ENCODE measurements at regions of chr12 and their contacts with region 1.

Region 1: DNA sequence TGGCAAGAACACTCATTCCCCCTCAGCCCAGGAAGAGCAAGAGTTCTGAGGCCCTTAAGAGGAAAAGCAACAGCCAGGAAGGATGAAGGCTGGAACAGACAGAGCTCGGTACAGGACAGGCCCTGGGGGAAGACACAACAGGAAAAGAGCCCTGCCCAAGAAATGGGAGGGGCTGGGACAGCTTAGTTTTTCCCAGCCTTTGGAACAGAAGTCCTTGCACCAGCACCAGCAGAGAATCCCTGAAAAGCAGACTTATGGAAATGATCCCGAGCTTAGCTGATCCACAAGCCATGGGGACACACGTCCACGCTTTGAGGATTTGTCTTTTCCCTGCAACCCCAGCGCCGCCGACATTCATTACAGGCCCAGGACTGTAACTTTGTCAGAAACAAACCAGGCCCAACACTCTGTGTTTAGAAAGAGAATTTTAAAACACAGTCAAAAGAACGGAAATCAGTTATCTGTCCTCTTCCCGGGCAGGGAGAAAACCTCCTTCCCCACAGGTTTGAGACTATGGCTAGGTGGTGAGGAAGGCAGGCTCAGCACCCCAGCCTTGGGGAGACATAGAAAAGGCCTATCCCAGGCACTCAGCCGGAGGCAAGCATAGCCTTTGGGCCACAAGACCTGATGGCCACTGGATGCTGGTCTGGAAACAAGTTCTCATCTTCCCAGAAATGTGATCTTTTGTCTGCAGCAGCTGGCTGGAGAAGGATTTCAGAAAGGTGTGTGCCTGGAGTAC is 4.0 kb upstream of the AVIL start:
- DNase-seq: no peak
- H3K4me3 ChIP-seq: no peak overlapping the region
- H3K27ac ChIP-seq: peak overlapping the region; percentile 22 to 33
- H3K4me1 ChIP-seq: no peaks in the 10 kb centered on the region
- H3K27me3 ChIP-seq: no peaks in the 10 kb centered on the region
- CTCF ChIP-seq: no peak
- POLR2A ChIP-seq: no peak

Region 2: GRCh38 chr12:57416039-57416996 is 406.2 kb before region 1 on chr12:
- intact Hi-C with region 1: no loop called
- DNase-seq: no peak
- H3K4me3 ChIP-seq: no peak overlapping the region
- H3K27ac ChIP-seq: no peak overlapping the region
- H3K4me1 ChIP-seq: no peaks in the 10 kb centered on the region
- H3K27me3 ChIP-seq: no peaks in the 10 kb centered on the region
- CTCF ChIP-seq: no peak
- POLR2A ChIP-seq: no peak

Region 3: DNA sequence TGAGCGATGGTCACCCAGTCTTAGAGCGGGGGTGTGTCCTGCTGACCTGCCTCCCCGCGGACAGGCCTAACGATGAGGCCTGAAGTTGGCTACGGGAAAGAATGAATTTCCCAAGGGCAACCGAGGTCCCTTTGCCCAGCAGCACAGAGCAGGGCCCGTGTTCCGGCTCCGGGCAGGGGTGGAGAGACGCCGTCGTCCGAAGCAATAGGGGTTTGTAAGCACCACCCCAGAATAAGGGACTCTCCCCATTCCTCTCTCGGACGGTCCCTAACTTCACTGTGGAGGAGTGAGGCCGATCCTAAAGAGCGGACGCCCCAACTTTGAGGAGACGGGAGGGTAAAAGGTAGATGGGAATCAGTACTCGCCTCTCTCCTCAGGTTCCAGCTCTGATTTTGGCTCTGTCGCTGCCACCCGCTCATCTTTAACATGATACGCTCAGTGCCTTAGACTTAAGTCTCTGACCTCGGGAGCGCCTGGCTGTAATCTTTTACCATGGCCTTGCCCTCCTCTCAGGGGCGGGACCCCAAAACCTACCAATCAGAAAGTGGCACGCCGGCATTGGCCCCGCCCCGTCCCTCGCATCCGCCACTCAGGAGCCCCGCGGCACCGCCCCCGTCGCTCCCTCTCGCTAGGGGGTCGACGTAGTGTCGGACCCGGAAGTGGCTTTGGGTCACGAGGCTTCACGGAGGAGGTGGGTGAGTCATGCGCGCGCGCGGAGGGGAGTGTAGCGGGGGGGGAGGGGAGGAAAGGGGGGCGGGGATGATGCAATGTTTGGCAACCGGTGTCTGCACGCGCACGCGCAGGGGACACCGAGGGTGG is 302.3 kb before region 1 on chr12 and contains the start of gene DDIT3:
- intact Hi-C with region 1: no loop called
- DNase-seq: peak; percentile 100
- H3K4me3 ChIP-seq: peak within 1 kb of the TSS; percentile 84 to 97 (median 93)
- H3K27ac ChIP-seq: peak within 1 kb of the TSS; percentile 99 to 100
- H3K4me1 ChIP-seq: peaks cover 13 to 41% of the 10 kb centered on the region in 2 donors
- H3K27me3 ChIP-seq: no peaks in the 10 kb centered on the region
- CTCF ChIP-seq: no peak
- POLR2A ChIP-seq: peak; percentile 98
- total RNA-seq, gene DDIT3: 39.0 to 58.4 (median 51.2) TPM

Region 4: GRCh38 chr12:57765042-57765697 is 57.4 kb before region 1 on chr12:
- intact Hi-C with region 1: no loop called
- DNase-seq: peak in 1 of 2 donors; percentile 54
- H3K4me3 ChIP-seq: peak overlapping the region; percentile 5 to 63 (median 56)
- H3K27ac ChIP-seq: no peak overlapping the region
- H3K4me1 ChIP-seq: peaks cover 0 to 8% of the 10 kb centered on the region in 2 donors
- H3K27me3 ChIP-seq: peaks cover 0 to 25% of the 10 kb centered on the region in 2 donors
- CTCF ChIP-seq: peak in 2 of 3 donors; percentile 22 to 23
- POLR2A ChIP-seq: no peak

Region 5: DNA sequence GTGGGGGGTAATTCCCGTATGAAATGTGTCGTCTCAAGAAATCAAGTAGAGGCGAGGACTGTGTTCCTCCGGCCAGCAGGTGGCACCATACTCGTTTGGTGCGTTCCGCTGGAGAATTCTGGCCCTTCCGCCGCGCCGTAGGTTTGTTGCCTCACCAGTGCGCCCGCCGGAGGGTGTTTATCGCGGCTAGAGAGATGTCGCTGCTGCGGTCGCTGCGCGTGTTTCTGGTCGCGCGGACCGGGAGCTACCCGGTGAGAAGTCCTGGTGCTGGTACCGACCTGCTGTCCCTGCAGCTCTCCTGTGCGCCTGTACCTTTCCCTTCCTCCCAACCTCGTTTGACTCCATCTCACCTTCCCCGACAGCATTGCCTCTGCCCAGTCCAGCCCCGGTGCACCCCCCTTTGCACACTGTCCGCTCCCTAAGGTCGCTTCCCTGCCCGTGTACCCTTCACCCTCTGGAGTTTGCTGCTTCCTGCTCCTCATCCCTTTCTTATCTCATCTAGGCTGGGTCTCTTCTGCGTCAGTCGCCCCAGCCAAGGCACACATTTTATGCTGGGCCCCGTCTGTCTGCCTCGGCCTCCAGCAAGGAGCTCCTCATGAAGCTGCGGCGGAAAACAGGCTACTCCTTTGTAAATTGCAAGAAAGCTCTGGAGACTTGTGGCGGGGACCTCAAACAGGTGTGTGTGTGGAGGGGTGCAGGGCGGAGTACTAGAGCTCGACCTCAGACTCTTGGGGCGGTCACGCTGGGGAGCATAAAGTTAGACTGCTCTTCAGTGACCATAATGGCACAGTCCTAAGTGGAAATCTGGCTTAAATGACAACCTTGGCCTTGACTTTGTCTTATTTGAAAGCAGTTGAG is 39.7 kb before region 1 on chr12 and contains the start of gene TSFM:
- intact Hi-C with region 1: loop called (anchors 5 kb)
- DNase-seq: peak; percentile 93 to 99
- H3K4me3 ChIP-seq: peak within 1 kb of the TSS; percentile 74 to 87 (median 86)
- H3K27ac ChIP-seq: peak within 1 kb of the TSS; percentile 82 to 88
- H3K4me1 ChIP-seq: no peaks in the 10 kb centered on the region
- H3K27me3 ChIP-seq: no peaks in the 10 kb centered on the region
- CTCF ChIP-seq: peak; percentile 93 to 97 (median 95)
- POLR2A ChIP-seq: peak; percentile 55
- total RNA-seq, gene TSFM: 17.9 to 30.8 (median 27.2) TPM

Measured in breast epithelium (tissue), 4 donors.